ENCODE measurements at regions of chr2 and their contacts with region 1.

Region 1: GRCh38 chr2:217756375-217757107 is 246.3 kb downstream of the TNS1 start:
- DNase-seq: peak; percentile 69 to 97 (median 86)

Region 2: GRCh38 chr2:216683846-216684507 is 1072.6 kb before region 1 on chr2:
- intact Hi-C with region 1: loop called (anchors 5 kb)
- DNase-seq: peak in 2 of 10 donors; percentile 42 to 85

Region 3: GRCh38 chr2:217650716-217651360 is 105.7 kb before region 1 on chr2:
- intact Hi-C with region 1: loop called (anchors 1 kb)
- DNase-seq: peak in 2 of 10 donors; percentile 7 to 33

Region 4: GRCh38 chr2:217774232-217774631 is 17.7 kb after region 1 on chr2:
- intact Hi-C with region 1: no loop called
- DNase-seq: no peak

Region 5: DNA sequence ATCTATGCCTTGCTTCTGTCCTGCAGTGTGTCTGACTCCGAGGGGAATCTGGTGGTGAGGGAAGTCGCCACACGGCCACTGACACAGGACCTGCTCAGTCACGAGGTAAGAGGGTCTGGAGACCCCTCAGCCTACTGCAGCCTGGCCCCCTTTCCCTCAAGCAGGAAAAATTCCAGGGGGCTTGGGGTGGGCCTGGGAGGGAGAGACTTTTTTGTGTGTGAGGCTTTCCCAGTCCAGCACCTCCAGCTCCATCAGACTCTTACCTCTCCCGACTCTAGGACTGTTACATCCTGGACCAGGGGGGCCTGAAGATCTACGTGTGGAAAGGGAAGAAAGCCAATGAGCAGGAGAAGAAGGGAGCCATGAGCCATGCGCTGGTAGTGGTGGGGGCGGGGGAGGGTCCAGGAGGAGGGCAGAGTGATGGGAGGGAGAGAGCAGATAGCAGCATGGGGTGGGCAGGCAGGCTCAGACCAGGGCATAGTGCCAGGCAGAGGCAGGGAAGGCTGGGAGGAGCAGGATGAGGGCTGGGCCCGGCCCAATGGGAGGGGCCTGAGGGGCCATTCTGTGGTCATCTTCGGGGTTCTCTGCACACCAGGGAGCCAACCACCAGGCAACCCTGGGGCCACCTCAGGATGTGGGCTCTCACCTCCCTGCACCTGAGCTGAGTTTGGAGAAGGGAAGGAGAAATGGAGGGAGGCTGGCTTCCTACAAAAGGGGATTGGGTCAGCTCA is 673.2 kb after region 1 on chr2:
- intact Hi-C with region 1: no loop called
- DNase-seq: peak in 2 of 10 donors; percentile 23 to 41

Measured in posterior cingulate gyrus (tissue), 11 donors.